Right lobe of liver (tissue), 6 donors: ENCODE measurements at regions of chr2 and their contacts with region 1.

Region 1: GRCh38 chr2:26745609-26746327 is 18.3 kb upstream of the SLC35F6 start:
- DNase-seq: peak; percentile 81 to 84 (median 81)
- ATAC-seq: peak; percentile 92 to 96 (median 94)
- H3K4me3 ChIP-seq: no peak overlapping the region
- H3K27ac ChIP-seq: no peak overlapping the region
- H3K4me1 ChIP-seq: peaks cover 0 to 4% (median 0%) of the 10 kb centered on the region in 4 donors
- H3K27me3 ChIP-seq: no peaks in the 10 kb centered on the region
- CTCF ChIP-seq: peak; percentile 90 to 98 (median 94)
- POLR2A ChIP-seq: no peak

Region 2: GRCh38 chr2:26605195-26605998 is 140.4 kb before region 1 on chr2:
- intact Hi-C with region 1: loop called (anchors 2 to 5 kb)
- DNase-seq: peak in 1 of 3 donors; percentile 24
- ATAC-seq: peak; percentile 73 to 84 (median 80)
- H3K4me3 ChIP-seq: no peak overlapping the region
- H3K27ac ChIP-seq: no peak overlapping the region
- H3K4me1 ChIP-seq: no peaks in the 10 kb centered on the region
- H3K27me3 ChIP-seq: no peaks in the 10 kb centered on the region
- CTCF ChIP-seq: peak; percentile 83 to 89 (median 84)
- POLR2A ChIP-seq: no peak

Region 3: DNA sequence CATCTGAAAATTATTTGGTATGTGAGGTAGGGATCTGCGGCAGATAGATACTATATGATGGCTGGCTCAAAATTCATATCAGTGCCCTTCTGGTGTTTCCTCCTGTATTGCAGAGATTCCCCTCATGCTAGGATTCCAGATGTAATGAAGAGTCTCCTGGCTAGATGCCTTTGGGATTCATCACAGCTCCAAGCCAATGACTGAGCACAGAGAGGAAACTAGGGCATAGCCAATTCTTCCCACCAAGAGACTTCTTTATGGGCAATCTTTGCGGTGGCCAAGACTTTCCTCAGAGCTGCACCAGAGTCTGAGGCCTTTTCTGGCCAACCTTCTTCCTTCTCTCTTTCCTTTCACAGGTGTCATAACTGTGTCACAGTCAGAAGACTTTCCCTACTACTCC is 79.1 kb before region 1 on chr2:
- intact Hi-C with region 1: no loop called
- DNase-seq: no peak
- ATAC-seq: no peak
- H3K4me3 ChIP-seq: no peak overlapping the region
- H3K27ac ChIP-seq: no peak overlapping the region
- H3K4me1 ChIP-seq: no peaks in the 10 kb centered on the region
- H3K27me3 ChIP-seq: no peaks in the 10 kb centered on the region
- CTCF ChIP-seq: no peak
- POLR2A ChIP-seq: no peak